A673 (cell line): ENCODE measurements at regions of chr7 and their contacts with region 1.

Region 1: GRCh38 chr7:30284298-30285066 is at the start of gene ZNRF2:
- DNase-seq: peak; percentile 98
- H3K4me3 ChIP-seq: peak within 1 kb of the TSS; percentile 90
- H3K27ac ChIP-seq: peak within 1 kb of the TSS; percentile 86
- H3K4me1 ChIP-seq: no peaks in the 10 kb centered on the region
- H3K27me3 ChIP-seq: no peaks in the 10 kb centered on the region
- CTCF ChIP-seq: peak; percentile 52
- total RNA-seq, gene ZNRF2: 7.9 and 8.1 TPM in 2 replicates

Region 2: DNA sequence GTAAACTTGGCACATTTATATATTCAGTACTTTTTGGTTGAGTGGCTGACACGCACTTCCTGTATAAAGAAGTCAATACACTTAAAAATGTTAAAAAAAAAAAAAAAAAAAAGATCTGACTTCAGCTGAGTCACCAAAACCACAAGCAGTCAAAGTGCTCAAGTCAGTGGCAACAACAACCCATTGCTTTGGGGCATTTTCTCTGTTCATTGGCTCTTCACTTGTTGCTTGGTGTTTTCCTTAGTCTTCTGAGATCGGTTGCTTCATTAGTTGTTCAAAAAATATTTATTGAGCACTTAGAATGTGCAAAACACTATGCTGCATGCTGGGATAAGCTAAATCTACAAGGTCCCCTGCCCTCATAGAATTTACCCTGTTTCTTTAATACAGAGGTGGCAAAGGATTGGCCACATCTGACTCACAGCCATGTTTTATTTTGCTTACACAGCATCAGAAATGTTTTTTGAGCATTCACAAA is 63.6 kb after region 1 on chr7:
- CTCF ChIA-PET with region 1: no interaction called
- POLR2A ChIA-PET with region 1: no interaction called
- intact Hi-C with region 1: loop called (anchors 5 kb)
- DNase-seq: peak; percentile 82
- H3K4me3 ChIP-seq: peak overlapping the region; percentile 10
- H3K27ac ChIP-seq: peak overlapping the region; percentile 76
- H3K4me1 ChIP-seq: peaks cover 74% of the 10 kb centered on the region
- H3K27me3 ChIP-seq: no peaks in the 10 kb centered on the region
- CTCF ChIP-seq: no peak

Region 3: GRCh38 chr7:30950197-30950596 is 665.7 kb after region 1 on chr7:
- CTCF ChIA-PET with region 1: no interaction called
- POLR2A ChIA-PET with region 1: no interaction called
- intact Hi-C with region 1: no loop called
- DNase-seq: no peak
- H3K4me3 ChIP-seq: no peak overlapping the region
- H3K27ac ChIP-seq: no peak overlapping the region
- H3K4me1 ChIP-seq: no peaks in the 10 kb centered on the region
- H3K27me3 ChIP-seq: peaks cover 33% of the 10 kb centered on the region
- CTCF ChIP-seq: no peak